ENCODE measurements at regions of chr1 and their contacts with region 1.

Region 1: DNA sequence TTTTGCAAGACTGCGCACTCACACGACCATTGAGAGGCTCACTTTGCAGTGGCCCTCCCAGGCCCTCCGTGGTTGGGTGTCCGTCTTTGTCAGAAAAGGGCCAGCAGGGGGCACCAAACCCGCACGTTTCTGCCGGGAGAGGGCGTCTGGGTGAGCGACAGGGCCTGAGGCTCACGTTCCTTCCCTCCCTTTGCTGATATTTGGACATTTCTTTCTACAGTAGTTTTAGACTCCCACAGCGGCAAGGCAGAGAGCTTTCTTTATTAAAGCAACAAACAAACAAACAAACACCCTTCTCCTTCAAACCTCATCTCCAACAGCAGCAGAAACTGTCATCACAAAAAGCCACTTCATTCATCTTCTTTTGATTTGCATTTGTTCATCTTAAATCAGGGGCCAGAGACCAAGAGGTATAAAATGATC is 79.2 kb upstream of the WDR26 start:
- DNase-seq: peak; percentile 82
- H3K4me3 ChIP-seq: no peak overlapping the region
- H3K27ac ChIP-seq: no peak overlapping the region
- H3K4me1 ChIP-seq: peaks cover 11% of the 10 kb centered on the region
- CTCF ChIP-seq: peak; percentile 97

Region 2: GRCh38 chr1:224609333-224609732 is 95.5 kb after region 1 on chr1:
- CTCF ChIA-PET with region 1: no interaction called
- POLR2A ChIA-PET with region 1: no interaction called
- intact Hi-C with region 1: loop called (anchors 10 kb)
- DNase-seq: no peak
- H3K4me3 ChIP-seq: no peak overlapping the region
- H3K27ac ChIP-seq: no peak overlapping the region
- H3K4me1 ChIP-seq: no peaks in the 10 kb centered on the region
- CTCF ChIP-seq: no peak

Region 3: GRCh38 chr1:224644553-224645154 is 130.9 kb after region 1 on chr1:
- CTCF ChIA-PET with region 1: no interaction called
- POLR2A ChIA-PET with region 1: no interaction called
- intact Hi-C with region 1: loop called (anchors 5 kb)
- DNase-seq: peak; percentile 64
- H3K4me3 ChIP-seq: no peak overlapping the region
- H3K27ac ChIP-seq: no peak overlapping the region
- H3K4me1 ChIP-seq: no peaks in the 10 kb centered on the region
- CTCF ChIP-seq: peak; percentile 92

Region 4: GRCh38 chr1:224700915-224701531 is 187.2 kb after region 1 on chr1:
- CTCF ChIA-PET with region 1: no interaction called
- POLR2A ChIA-PET with region 1: no interaction called
- intact Hi-C with region 1: loop called (anchors 5 kb)
- DNase-seq: peak; percentile 68
- H3K4me3 ChIP-seq: no peak overlapping the region
- H3K27ac ChIP-seq: no peak overlapping the region
- H3K4me1 ChIP-seq: no peaks in the 10 kb centered on the region
- CTCF ChIP-seq: peak; percentile 85

Region 5: DNA sequence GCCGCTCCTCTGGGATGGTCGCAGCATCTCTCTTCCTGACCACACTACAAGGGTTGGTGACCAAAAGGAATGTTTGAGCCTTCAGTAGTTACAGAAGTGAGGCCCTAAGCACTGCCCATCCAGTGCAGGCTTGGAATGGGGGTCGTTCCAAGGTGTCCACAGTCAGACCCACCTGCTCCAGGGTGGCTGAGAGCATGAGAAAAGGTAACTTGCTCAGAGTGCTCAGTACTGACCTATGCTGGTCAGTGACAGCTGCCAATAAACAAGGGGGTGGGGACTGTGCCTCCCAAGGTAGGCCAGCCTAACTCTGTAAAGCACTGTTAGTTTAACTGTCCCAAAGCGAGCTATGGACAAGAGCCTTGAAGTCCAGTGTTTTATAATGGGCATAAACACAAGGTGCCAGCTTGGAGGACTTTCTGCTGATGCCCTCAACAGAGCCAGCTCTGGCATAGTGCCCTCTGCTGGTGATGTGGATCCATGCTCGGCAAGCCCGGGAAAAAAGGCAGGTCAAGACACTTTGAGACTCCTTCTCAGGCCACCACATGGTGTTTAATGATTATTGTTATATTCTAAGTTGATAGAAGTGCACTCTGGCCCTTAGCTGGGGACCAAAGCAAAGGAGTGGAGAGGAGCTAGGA is 337.5 kb after region 1 on chr1:
- CTCF ChIA-PET with region 1: no interaction called
- POLR2A ChIA-PET with region 1: interaction called, 3 read pairs
- intact Hi-C with region 1: loop called (anchors 1 kb)
- DNase-seq: peak; percentile 71
- H3K4me3 ChIP-seq: no peak overlapping the region
- H3K27ac ChIP-seq: no peak overlapping the region
- H3K4me1 ChIP-seq: peaks cover 10% of the 10 kb centered on the region
- CTCF ChIP-seq: peak; percentile 88

Region 6: DNA sequence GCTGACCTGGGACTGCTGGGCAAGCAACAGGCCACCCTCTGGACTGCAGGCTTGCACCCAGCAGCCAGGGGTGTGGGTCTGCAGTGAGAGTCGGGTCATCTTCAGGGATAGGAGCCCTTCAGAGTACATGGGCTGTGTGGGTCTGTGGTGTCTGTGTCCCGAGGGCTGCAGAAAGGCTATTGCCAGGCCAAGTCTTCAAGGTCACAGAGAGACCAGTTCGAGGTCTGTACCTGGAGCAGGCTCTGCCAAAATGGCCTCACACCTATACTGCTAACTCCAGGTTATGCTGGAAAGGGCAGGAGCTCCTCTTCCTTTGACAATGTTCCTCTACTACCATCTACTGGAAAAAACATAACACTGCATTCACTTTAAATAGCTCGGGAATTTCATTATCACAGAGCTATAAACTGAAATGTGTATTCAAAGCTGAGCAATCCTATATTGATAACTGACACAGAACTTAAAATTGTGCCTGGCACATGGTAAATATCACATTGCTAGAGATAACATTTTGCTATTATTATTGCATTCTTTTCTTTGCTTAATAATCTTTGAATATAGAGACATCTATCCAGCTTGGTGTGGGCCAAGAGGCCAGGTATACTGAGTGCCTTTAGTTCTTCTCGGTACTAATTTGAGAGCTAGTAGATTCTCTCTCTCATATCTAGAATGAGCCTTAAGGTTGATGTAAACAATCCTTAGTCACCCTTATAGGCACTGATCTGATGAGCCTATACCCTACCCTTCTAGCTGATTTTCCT is 408.8 kb after region 1 on chr1:
- CTCF ChIA-PET with region 1: interaction called, 3 read pairs
- POLR2A ChIA-PET with region 1: no interaction called
- intact Hi-C with region 1: loop called (anchors 2 kb)
- DNase-seq: peak; percentile 27
- H3K4me3 ChIP-seq: no peak overlapping the region
- H3K27ac ChIP-seq: no peak overlapping the region
- H3K4me1 ChIP-seq: no peaks in the 10 kb centered on the region
- CTCF ChIP-seq: peak; percentile 79

Measured in OCI-LY7 (cell line).